ENCODE measurements at regions of chr2 and their contacts with region 1.

Region 1: GRCh38 chr2:217886720-217887309 is 116.0 kb downstream of the TNS1 start:
- DNase-seq: peak; percentile 33
- H3K4me3 Mint-ChIP-seq: no peak overlapping the region
- H3K27ac Mint-ChIP-seq: no peak overlapping the region
- H3K4me1 Mint-ChIP-seq: no peaks in the 10 kb centered on the region
- H3K27me3 Mint-ChIP-seq: peaks cover 5% of the 10 kb centered on the region

Region 2: GRCh38 chr2:217988014-217988839 is 101.4 kb after region 1 on chr2:
- intact Hi-C with region 1: loop called (anchors 1 kb)
- DNase-seq: peak; percentile 45
- H3K4me3 Mint-ChIP-seq: no peak overlapping the region
- H3K27ac Mint-ChIP-seq: no peak overlapping the region
- H3K4me1 Mint-ChIP-seq: no peaks in the 10 kb centered on the region
- H3K27me3 Mint-ChIP-seq: peaks cover 11% of the 10 kb centered on the region

Region 3: GRCh38 chr2:218152765-218153164 is 265.9 kb after region 1 on chr2:
- intact Hi-C with region 1: no loop called
- DNase-seq: no peak
- H3K4me3 Mint-ChIP-seq: no peak overlapping the region
- H3K27ac Mint-ChIP-seq: no peak overlapping the region
- H3K4me1 Mint-ChIP-seq: peaks cover 8% of the 10 kb centered on the region
- H3K27me3 Mint-ChIP-seq: peaks cover 28% of the 10 kb centered on the region